Activated naive CD4-positive, alpha-beta T cell treated with anti-CD3 and anti-CD28 coated beads for 36 hours (primary cell): ENCODE measurements at regions of chr13 and their contacts with region 1.

Region 1: GRCh38 chr13:33542283-33543088 is 256.9 kb upstream of the STARD13 start:
- DNase-seq: peak; percentile 98
- H3K4me3 Mint-ChIP-seq: peak overlapping the region; percentile 79
- H3K27ac Mint-ChIP-seq: peak overlapping the region; percentile 99
- H3K4me1 Mint-ChIP-seq: peaks cover 54% of the 10 kb centered on the region
- H3K27me3 Mint-ChIP-seq: no peaks in the 10 kb centered on the region

Region 2: GRCh38 chr13:32315238-32316027 is 1227.1 kb before region 1 on chr13 and contains the starts of genes BRCA2 and ZAR1L:
- CTCF ChIA-PET with region 1: no interaction called
- intact Hi-C with region 1: loop called (anchors 1 kb)
- DNase-seq: peak; percentile 91
- H3K4me3 Mint-ChIP-seq: peak within 1 kb of the TSS; percentile 92
- H3K27ac Mint-ChIP-seq: peak within 1 kb of the TSS; percentile 98
- H3K4me1 Mint-ChIP-seq: peaks cover 12% of the 10 kb centered on the region
- H3K27me3 Mint-ChIP-seq: no peaks in the 10 kb centered on the region
- total RNA-seq, gene BRCA2: 17.3 to 21.3 TPM
- total RNA-seq, gene ZAR1L: not detected

Region 3: GRCh38 chr13:32650705-32651311 is 891.7 kb before region 1 on chr13:
- CTCF ChIA-PET with region 1: interaction called, 3 read pairs
- intact Hi-C with region 1: loop called (anchors 2 kb)
- DNase-seq: peak; percentile 79
- H3K4me3 Mint-ChIP-seq: no peak overlapping the region
- H3K27ac Mint-ChIP-seq: peak overlapping the region; percentile 12
- H3K4me1 Mint-ChIP-seq: peaks cover 39% of the 10 kb centered on the region
- H3K27me3 Mint-ChIP-seq: no peaks in the 10 kb centered on the region

Region 4: DNA sequence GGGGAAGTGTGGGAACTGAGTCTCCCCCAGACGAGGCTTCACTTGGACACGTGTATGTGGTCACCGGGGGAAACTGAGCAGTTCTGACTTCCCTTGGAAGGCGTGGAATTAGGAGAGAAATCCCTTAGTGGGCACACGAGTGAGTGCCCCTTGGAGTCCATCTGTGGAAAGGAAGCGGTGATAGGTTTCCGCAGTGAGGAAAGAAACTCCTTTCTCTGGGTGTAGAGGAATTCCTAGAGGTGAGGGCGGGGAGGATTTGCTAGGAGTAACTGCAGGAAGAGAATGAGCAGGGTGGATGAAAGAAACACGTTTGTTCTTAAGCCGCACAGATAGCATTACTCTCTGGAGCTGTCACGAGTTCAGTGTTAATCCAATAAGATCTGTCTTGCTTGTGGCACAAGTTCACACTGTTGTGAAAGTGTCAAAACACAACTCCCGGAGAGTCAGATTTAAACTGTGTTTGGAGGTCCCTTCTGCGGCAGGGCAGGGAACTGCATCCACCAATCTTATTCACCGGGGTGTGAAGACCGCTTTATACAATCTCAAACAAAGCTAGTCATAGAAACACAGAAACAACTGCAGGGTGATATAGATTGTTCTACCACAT is 525.1 kb before region 1 on chr13:
- CTCF ChIA-PET with region 1: no interaction called
- intact Hi-C with region 1: loop called (anchors 1 kb)
- DNase-seq: peak; percentile 79
- H3K4me3 Mint-ChIP-seq: peak overlapping the region; percentile 64
- H3K27ac Mint-ChIP-seq: peak overlapping the region; percentile 7
- H3K4me1 Mint-ChIP-seq: peaks cover 9% of the 10 kb centered on the region
- H3K27me3 Mint-ChIP-seq: peaks cover 59% of the 10 kb centered on the region

Region 5: GRCh38 chr13:33612641-33613638 is 70.5 kb after region 1 on chr13:
- CTCF ChIA-PET with region 1: interaction called, 7 read pairs
- intact Hi-C with region 1: loop called (anchors 1 kb)
- DNase-seq: peak; percentile 63
- H3K4me3 Mint-ChIP-seq: peak overlapping the region; percentile 5
- H3K27ac Mint-ChIP-seq: peak overlapping the region; percentile 86
- H3K4me1 Mint-ChIP-seq: peaks cover 40% of the 10 kb centered on the region
- H3K27me3 Mint-ChIP-seq: peaks cover 6% of the 10 kb centered on the region

Region 6: GRCh38 chr13:34156841-34157365 is 614.4 kb after region 1 on chr13:
- CTCF ChIA-PET with region 1: no interaction called
- intact Hi-C with region 1: loop called (anchors 2 kb)
- DNase-seq: peak; percentile 68
- H3K4me3 Mint-ChIP-seq: no peak overlapping the region
- H3K27ac Mint-ChIP-seq: no peak overlapping the region
- H3K4me1 Mint-ChIP-seq: peaks cover 8% of the 10 kb centered on the region
- H3K27me3 Mint-ChIP-seq: peaks cover 30% of the 10 kb centered on the region